MCF 10A (cell line): ENCODE measurements at regions of chr12 and their contacts with region 1.

Region 1: DNA sequence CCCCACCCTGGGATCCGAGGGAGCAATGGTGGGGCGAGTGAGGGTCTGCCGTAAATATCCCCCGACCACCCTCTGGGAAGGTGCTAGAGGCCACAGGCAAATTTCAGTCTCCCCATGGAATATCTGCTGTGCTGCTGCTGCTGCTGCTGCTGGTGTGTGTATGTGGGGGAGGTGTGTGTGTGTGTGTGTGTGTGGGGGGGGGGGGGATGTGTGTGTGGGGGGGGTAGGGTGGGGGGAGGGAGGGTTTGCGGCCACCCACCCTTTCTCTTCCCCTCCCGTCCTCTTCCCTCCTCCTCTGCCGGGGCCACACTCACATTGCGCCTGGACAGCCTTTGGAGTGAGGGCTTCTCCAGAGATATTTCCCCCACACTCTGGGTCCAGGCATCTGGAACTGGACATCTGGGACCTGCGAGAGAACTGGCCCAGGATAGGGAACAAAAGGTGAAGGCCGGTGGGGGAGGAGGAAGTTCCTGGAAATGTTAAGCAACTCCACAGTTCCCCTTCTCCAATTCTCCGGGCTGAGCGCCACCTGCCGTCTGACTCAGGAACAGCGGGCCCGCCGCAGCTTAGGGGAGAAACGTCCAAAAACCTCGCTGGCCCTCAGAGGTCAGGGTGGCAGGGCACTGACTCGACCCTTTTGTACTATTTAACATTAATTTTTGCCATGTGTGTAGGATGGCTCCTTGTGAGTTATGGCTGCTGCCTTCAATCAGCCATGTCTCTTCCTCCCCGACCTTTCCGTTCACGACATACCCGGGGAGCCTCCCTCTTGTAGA is at the start of gene C1RL:
- DNase-seq: peak; percentile 95
- H3K4me3 Mint-ChIP-seq: peak within 1 kb of the TSS; percentile 95
- H3K27ac Mint-ChIP-seq: peak within 1 kb of the TSS; percentile 90
- H3K4me1 Mint-ChIP-seq: peaks cover 24% of the 10 kb centered on the region
- H3K27me3 Mint-ChIP-seq: no peaks in the 10 kb centered on the region
- CTCF ChIP-seq: peak; percentile 92
- total RNA-seq, gene C1RL: 49.8 and 55.7 TPM in 2 replicates

Region 2: GRCh38 chr12:6825398-6826124 is 283.4 kb before region 1 on chr12:
- CTCF ChIA-PET with region 1: no interaction called
- POLR2A ChIA-PET with region 1: no interaction called
- intact Hi-C with region 1: no loop called
- DNase-seq: peak; percentile 84
- H3K4me3 Mint-ChIP-seq: no peak overlapping the region
- H3K27ac Mint-ChIP-seq: no peak overlapping the region
- H3K4me1 Mint-ChIP-seq: peaks cover 29% of the 10 kb centered on the region
- H3K27me3 Mint-ChIP-seq: peaks cover 99% of the 10 kb centered on the region
- CTCF ChIP-seq: peak; percentile 90

Region 3: GRCh38 chr12:6927379-6928024 is 181.5 kb before region 1 on chr12 and contains the start of gene ATN1:
- CTCF ChIA-PET with region 1: interaction called, 20 read pairs
- POLR2A ChIA-PET with region 1: interaction called, 23 read pairs
- intact Hi-C with region 1: loop called (anchors 2 kb)
- DNase-seq: peak; percentile 66
- H3K4me3 Mint-ChIP-seq: peak within 1 kb of the TSS; percentile 91
- H3K27ac Mint-ChIP-seq: peak within 1 kb of the TSS; percentile 92
- H3K4me1 Mint-ChIP-seq: peaks cover 69% of the 10 kb centered on the region
- H3K27me3 Mint-ChIP-seq: no peaks in the 10 kb centered on the region
- CTCF ChIP-seq: no peak
- total RNA-seq, gene ATN1: 83.7 and 84.7 TPM in 2 replicates

Region 4: GRCh38 chr12:6965026-6965661 is 143.8 kb before region 1 on chr12:
- CTCF ChIA-PET with region 1: interaction called, 36 read pairs
- POLR2A ChIA-PET with region 1: interaction called, 50 read pairs
- intact Hi-C with region 1: loop called (anchors 5 kb)
- DNase-seq: peak; percentile 92
- H3K4me3 Mint-ChIP-seq: peak overlapping the region; percentile 87
- H3K27ac Mint-ChIP-seq: peak overlapping the region; percentile 94
- H3K4me1 Mint-ChIP-seq: peaks cover 63% of the 10 kb centered on the region
- H3K27me3 Mint-ChIP-seq: no peaks in the 10 kb centered on the region
- CTCF ChIP-seq: peak; percentile 82

Region 5: GRCh38 chr12:7060353-7060954 is 48.5 kb before region 1 on chr12 and contains the start of gene C1S:
- CTCF ChIA-PET with region 1: interaction called, 123 read pairs
- POLR2A ChIA-PET with region 1: interaction called, 46 read pairs
- intact Hi-C with region 1: loop called (anchors 1 kb)
- DNase-seq: peak; percentile 98
- H3K4me3 Mint-ChIP-seq: peak within 1 kb of the TSS; percentile 63
- H3K27ac Mint-ChIP-seq: peak within 1 kb of the TSS; percentile 87
- H3K4me1 Mint-ChIP-seq: peaks cover 20% of the 10 kb centered on the region
- H3K27me3 Mint-ChIP-seq: peaks cover under 1% of the 10 kb centered on the region
- CTCF ChIP-seq: peak; percentile 70
- total RNA-seq, gene C1S: 6.0 and 11.5 TPM in 2 replicates

Region 6: DNA sequence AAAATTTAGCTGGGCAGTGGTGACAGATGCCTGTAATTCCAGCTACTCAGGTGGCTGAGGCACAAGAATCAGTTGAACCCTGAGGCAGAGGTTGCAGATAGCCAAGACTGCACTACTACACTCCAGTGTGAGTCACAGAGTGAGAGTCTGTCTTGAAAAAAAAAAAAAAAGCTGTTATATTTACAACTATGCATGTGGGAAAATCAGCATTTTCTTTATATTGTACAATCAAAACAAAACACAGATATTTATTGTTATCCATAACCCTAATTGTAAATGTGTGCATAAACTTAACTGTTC is 29.2 kb before region 1 on chr12:
- CTCF ChIA-PET with region 1: interaction called, 6 read pairs
- POLR2A ChIA-PET with region 1: interaction called, 33 read pairs
- intact Hi-C with region 1: no loop called
- DNase-seq: peak; percentile 89
- H3K4me3 Mint-ChIP-seq: peak overlapping the region; percentile 46
- H3K27ac Mint-ChIP-seq: peak overlapping the region; percentile 73
- H3K4me1 Mint-ChIP-seq: peaks cover 26% of the 10 kb centered on the region
- H3K27me3 Mint-ChIP-seq: no peaks in the 10 kb centered on the region
- CTCF ChIP-seq: no peak

Region 7: GRCh38 chr12:7142056-7142644 is 33.2 kb after region 1 on chr12:
- CTCF ChIA-PET with region 1: interaction called, 14 read pairs
- POLR2A ChIA-PET with region 1: no interaction called
- intact Hi-C with region 1: no loop called
- DNase-seq: peak; percentile 70
- H3K4me3 Mint-ChIP-seq: no peak overlapping the region
- H3K27ac Mint-ChIP-seq: no peak overlapping the region
- H3K4me1 Mint-ChIP-seq: no peaks in the 10 kb centered on the region
- H3K27me3 Mint-ChIP-seq: no peaks in the 10 kb centered on the region
- CTCF ChIP-seq: peak; percentile 45

Region 8: GRCh38 chr12:7162691-7163114 is 53.7 kb after region 1 on chr12:
- CTCF ChIA-PET with region 1: interaction called, 12 read pairs
- POLR2A ChIA-PET with region 1: interaction called, 7 read pairs
- intact Hi-C with region 1: no loop called
- DNase-seq: peak; percentile 68
- H3K4me3 Mint-ChIP-seq: no peak overlapping the region
- H3K27ac Mint-ChIP-seq: no peak overlapping the region
- H3K4me1 Mint-ChIP-seq: peaks cover 26% of the 10 kb centered on the region
- H3K27me3 Mint-ChIP-seq: no peaks in the 10 kb centered on the region
- CTCF ChIP-seq: peak; percentile 25

Region 9: GRCh38 chr12:7229741-7230140 is 120.8 kb after region 1 on chr12:
- CTCF ChIA-PET with region 1: no interaction called
- POLR2A ChIA-PET with region 1: no interaction called
- intact Hi-C with region 1: no loop called
- DNase-seq: no peak
- H3K4me3 Mint-ChIP-seq: no peak overlapping the region
- H3K27ac Mint-ChIP-seq: no peak overlapping the region
- H3K4me1 Mint-ChIP-seq: no peaks in the 10 kb centered on the region
- H3K27me3 Mint-ChIP-seq: peaks cover 17% of the 10 kb centered on the region
- CTCF ChIP-seq: no peak

Region 10: DNA sequence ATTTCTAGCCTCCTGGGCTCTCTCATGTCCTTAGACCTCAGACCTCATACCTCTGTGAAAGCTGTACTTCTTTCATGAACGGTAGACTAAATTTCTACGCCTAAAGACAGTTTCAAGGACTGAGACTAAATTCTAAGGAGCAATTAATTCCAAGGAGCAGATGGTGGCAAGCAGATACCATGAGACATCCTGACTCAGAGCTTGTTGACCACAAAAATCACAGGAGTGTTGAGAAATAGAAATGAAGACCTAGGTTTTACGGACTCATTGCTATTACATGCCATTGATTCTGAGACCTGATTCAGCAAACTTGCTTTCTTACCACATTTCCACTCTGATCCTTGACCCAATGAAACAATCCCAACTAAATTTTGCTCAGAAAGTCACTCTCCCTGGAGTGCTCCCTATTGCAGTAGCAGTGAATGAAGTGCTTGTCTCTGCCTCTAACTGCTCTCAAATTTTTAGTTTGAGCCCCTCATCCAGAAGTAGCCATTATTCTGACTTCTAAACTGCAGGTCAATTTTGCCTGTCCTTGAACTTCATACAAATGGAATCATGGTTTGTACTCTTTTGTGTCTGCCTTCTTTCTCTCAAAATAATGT is 132.5 kb after region 1 on chr12:
- CTCF ChIA-PET with region 1: no interaction called
- POLR2A ChIA-PET with region 1: no interaction called
- intact Hi-C with region 1: no loop called
- DNase-seq: peak; percentile 75
- H3K4me3 Mint-ChIP-seq: no peak overlapping the region
- H3K27ac Mint-ChIP-seq: peak overlapping the region; percentile 67
- H3K4me1 Mint-ChIP-seq: peaks cover 14% of the 10 kb centered on the region
- H3K27me3 Mint-ChIP-seq: no peaks in the 10 kb centered on the region
- CTCF ChIP-seq: no peak